Sciatic nerve (tissue), 2 donors: ENCODE measurements at regions of chr4 and their contacts with region 1.

Region 1: DNA sequence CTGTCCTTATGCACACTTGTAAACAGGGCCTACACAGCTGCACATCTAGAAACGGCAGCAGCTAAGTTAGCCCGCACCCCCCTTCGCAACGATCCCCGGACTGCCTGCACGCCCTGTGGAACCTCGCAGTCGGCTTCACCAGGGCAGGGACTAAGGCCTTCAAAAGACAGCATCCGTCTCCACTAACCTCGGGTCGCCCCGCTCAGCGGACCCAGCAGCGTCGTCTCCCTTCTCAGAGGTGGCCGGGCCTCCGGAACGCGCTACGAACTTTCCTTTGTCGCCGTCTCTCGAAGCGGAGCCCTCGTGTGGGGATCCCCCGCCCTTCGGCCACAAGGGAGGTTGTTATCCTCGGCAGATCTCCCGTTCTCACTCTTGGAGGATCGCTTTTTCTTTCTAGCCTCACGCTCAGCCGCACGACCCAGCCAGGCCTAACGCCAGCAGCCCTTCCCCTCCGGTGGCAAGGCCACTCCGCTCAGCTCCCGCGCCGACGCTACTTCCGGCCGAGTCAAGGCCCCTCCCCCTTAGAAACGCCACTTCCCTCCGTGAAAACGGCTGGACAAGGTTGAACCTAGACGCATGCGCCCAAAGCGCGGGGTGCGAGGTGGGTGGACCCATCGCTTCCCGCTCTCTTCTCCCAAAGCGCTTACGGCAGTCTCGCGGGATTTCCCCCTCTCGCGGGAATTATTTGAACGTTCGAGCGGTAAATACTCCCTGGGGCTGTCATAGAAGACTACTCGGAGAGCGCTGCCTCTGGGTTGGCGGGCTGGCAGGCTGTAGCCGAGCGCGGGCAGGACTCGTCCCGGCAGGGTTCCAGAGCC is at the starts of genes DCAF16 and NCAPG:
- DNase-seq: peak; percentile 100
- ATAC-seq: peak; percentile 100
- total RNA-seq, gene DCAF16: 47.7 TPM
- total RNA-seq, gene NCAPG: 0.49 TPM

Region 2: DNA sequence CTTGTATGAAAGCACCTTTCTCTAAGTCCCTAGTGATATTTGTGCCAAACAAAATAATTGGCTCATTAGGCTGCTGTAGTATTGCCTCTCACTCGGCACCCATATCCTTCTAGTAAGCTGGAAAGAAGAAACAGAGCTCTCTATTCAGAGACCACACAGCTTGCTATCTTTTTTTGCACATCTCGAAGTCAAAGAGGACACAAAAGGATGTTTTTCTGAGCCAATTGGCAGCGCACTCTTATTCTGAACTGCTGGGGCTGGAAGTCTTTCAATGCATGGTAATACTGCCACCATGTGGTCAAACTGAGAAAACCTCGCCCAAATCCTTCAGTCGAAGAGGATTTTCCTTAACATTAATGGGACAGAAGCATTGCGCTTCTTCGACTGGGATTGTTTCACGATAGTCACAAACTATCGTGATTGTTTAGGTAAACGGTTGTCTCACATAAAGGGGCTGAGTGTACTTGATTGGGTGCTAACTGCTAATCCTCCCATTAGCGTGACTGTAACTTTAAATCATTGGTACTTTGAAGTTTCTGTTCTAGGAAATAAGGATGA is 783.1 kb after region 1 on chr4:
- intact Hi-C with region 1: loop called (anchors 10 kb)
- DNase-seq: peak; percentile 72
- ATAC-seq: peak; percentile 97

Region 3: DNA sequence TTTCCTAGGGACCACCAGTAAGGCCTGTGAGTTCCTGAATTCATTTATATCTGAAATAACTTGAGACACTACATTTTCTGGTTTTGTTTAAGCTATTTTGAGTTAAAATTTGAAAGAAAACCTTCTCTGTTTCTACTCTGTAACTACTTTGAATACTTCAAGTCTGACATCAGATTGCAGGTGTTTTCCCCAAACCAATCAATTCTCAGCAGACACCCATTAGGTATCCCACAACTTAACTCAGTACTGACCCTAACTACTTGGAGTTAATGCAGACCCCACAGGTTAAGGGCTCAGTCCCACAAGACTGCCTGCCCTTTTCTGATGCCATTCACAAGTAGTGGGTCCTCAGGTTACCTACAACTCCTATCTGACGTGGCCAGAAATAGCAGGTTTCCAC is 1341.2 kb after region 1 on chr4:
- intact Hi-C with region 1: no loop called
- DNase-seq: no peak
- ATAC-seq: no peak